ENCODE measurements at regions of chr1 and their contacts with region 1.

Region 1: GRCh38 chr1:88180449-88181108 is 503.5 kb upstream of the PKN2 start:
- DNase-seq: no peak
- H3K4me3 ChIP-seq: no peak overlapping the region
- H3K27ac ChIP-seq: no peak overlapping the region
- H3K4me1 ChIP-seq: no peaks in the 10 kb centered on the region
- H3K27me3 ChIP-seq: no peaks in the 10 kb centered on the region
- CTCF ChIP-seq: peak; percentile 71 to 93 (median 87)
- EP300 ChIP-seq: no peak
- POLR2A ChIP-seq: no peak

Region 2: DNA sequence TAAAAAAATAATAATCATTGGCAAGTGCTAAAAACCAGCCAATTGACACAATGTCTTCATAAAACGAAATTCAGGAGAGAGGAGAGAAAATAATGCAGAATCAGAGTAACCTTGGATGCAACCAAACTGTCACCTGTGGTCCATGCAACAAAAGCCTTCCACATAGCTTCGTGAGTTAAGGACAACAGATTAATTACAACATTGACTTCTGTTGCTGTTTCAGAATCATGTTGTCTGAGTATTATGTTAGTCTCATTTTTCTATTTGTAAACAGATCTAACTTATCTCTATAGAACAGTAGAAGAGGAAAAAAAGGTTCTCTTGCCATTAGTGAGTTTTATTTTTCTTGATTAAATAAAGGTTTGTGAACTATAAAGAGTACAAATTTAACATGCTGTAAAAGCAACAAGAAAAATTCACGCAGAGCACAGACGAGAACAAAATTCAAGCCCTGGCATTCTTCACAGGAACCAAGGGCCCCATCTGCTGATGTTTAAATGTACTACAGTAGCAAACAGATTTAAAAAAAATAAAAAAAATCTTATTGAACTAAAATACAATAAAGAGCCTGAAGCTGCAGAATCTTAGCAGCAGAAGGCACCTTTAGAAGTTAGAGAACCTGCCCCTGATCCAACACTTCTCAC is 122.4 kb after region 1 on chr1:
- intact Hi-C with region 1: loop called (anchors 5 kb)
- DNase-seq: no peak
- H3K4me3 ChIP-seq: no peak overlapping the region
- H3K27ac ChIP-seq: no peak overlapping the region
- H3K4me1 ChIP-seq: peaks cover 0 to 7% (median 3%) of the 10 kb centered on the region in 4 donors
- H3K27me3 ChIP-seq: no peaks in the 10 kb centered on the region
- CTCF ChIP-seq: peak; percentile 43 to 53 (median 46)
- EP300 ChIP-seq: no peak
- POLR2A ChIP-seq: no peak

Region 3: GRCh38 chr1:88371396-88371795 is 190.8 kb after region 1 on chr1:
- intact Hi-C with region 1: no loop called
- DNase-seq: no peak
- H3K4me3 ChIP-seq: no peak overlapping the region
- H3K27ac ChIP-seq: no peak overlapping the region
- H3K4me1 ChIP-seq: no peaks in the 10 kb centered on the region
- H3K27me3 ChIP-seq: no peaks in the 10 kb centered on the region
- CTCF ChIP-seq: no peak
- EP300 ChIP-seq: no peak
- POLR2A ChIP-seq: no peak

Region 4: GRCh38 chr1:88552226-88552625 is 371.6 kb after region 1 on chr1:
- intact Hi-C with region 1: loop called (anchors 5 kb)
- DNase-seq: no peak
- H3K4me3 ChIP-seq: no peak overlapping the region
- H3K27ac ChIP-seq: no peak overlapping the region
- H3K4me1 ChIP-seq: peaks cover 0 to 5% (median 0%) of the 10 kb centered on the region in 4 donors
- H3K27me3 ChIP-seq: no peaks in the 10 kb centered on the region
- CTCF ChIP-seq: no peak
- EP300 ChIP-seq: no peak
- POLR2A ChIP-seq: no peak